ENCODE measurements at regions of chr3 and their contacts with region 1.

Region 1: GRCh38 chr3:45109771-45110508 is 36.2 kb downstream of the CDCP1 start:
- DNase-seq: peak in 1 of 5 donors; percentile 20
- ATAC-seq: no peak
- H3K4me3 ChIP-seq: peak overlapping the region in 1 of 12 donors; percentile 3
- H3K27ac ChIP-seq: peak overlapping the region in 1 of 12 donors; percentile 14
- H3K4me1 ChIP-seq: peaks cover 0 to 31% (median 8%) of the 10 kb centered on the region in 12 donors
- H3K27me3 ChIP-seq: no peaks in the 10 kb centered on the region
- CTCF ChIP-seq: no peak
- POLR2A ChIP-seq: no peak

Region 2: DNA sequence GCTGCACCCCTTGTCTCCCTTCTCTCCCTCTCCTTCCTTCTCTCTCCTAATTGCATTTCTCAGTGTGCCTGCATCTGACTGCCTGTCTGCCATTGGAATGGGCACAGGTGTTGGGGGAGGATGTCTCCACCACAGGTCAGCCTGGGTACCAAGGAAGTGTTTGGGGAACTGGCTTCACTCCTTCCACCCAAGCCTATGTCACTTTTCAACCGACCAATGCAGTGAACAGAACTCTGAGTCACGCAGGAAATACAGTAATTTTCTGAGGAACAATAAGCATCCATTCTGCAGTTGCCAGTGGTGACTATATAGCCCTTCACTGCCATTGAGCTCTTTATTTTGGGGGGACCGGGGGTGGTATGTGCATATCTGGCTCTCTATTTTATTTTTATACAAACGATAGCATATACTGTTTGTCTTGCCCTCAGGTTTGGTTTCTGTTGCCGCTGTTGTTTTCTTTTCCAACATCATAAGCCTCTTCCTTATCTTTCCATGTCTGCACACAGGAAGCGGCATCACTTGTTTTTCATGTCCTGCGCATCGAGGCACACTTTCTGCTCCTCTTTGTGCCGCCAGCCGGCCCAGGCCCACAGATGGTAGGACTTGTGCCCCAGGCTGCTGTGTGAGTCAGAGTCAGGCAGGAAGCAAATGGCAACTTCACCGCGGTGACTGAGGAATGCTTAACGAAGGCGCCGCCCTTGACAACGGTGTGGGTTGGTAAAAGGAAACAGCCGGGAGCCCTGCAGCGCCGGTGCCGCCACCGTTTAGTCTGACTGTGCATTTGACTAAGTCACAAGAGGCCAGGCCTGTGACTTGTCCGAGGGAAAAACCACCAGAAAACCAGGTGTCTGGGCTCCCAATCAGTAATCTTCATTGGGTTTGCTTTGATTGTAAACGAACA is 57.3 kb after region 1 on chr3:
- intact Hi-C with region 1: loop called in 1 of 10 experiments (anchors 5 kb)
- DNase-seq: peak; percentile 61 to 84 (median 78)
- ATAC-seq: peak; percentile 67 to 94 (median 88)
- H3K4me3 ChIP-seq: peak overlapping the region in 5 of 12 donors; percentile 3 to 32 (median 15)
- H3K27ac ChIP-seq: peak overlapping the region in 5 of 12 donors; percentile 3 to 74 (median 24)
- H3K4me1 ChIP-seq: peaks cover 0 to 30% (median 7%) of the 10 kb centered on the region in 12 donors
- H3K27me3 ChIP-seq: no peaks in the 10 kb centered on the region
- CTCF ChIP-seq: no peak
- POLR2A ChIP-seq: no peak